ENCODE measurements at regions of chr6 and their contacts with region 1.

Region 1: GRCh38 chr6:21593412-21593926 is at the start of gene SOX4:
- DNase-seq: peak; percentile 82
- ATAC-seq: peak; percentile 67
- H3K4me3 Mint-ChIP-seq: no peak within 1 kb of the TSS
- H3K27ac Mint-ChIP-seq: peak within 1 kb of the TSS; percentile 77
- H3K4me1 Mint-ChIP-seq: peaks cover 21% of the 10 kb centered on the region
- H3K27me3 Mint-ChIP-seq: peaks cover 37% of the 10 kb centered on the region
- total RNA-seq, gene SOX4: 2.3 to 2.5 TPM

Region 2: GRCh38 chr6:20291764-20292580 is 1301.5 kb before region 1 on chr6:
- CTCF ChIA-PET with region 1: interaction called, 3 read pairs
- POLR2A ChIA-PET with region 1: no interaction called
- intact Hi-C with region 1: loop called in 1 of 2 experiments (anchors 5 kb)
- DNase-seq: peak; percentile 87
- ATAC-seq: peak; percentile 90
- H3K4me3 Mint-ChIP-seq: peak overlapping the region; percentile 16
- H3K27ac Mint-ChIP-seq: peak overlapping the region; percentile 8
- H3K4me1 Mint-ChIP-seq: peaks cover 21% of the 10 kb centered on the region
- H3K27me3 Mint-ChIP-seq: no peaks in the 10 kb centered on the region

Region 3: DNA sequence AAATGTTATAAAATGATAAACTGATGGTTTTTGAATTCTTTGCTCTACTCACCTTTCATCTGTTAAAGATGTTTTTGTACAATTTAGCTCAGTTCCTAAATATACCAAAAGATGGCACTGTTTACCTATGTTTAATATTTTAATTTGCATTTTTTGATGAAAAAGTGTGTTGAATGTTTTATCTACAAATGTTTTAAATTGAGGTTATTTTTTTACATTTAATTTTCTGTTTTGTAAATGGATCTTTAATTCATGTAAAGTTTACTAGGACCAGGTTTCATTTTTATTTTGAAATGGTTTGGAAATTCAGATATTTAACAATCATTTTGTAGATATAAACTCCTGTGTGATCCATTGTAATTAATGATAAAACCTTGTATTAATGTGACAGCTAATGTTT is 1029.2 kb before region 1 on chr6:
- CTCF ChIA-PET with region 1: interaction called, 37 read pairs
- POLR2A ChIA-PET with region 1: no interaction called
- intact Hi-C with region 1: loop called (anchors 1 kb)
- DNase-seq: no peak
- ATAC-seq: no peak
- H3K4me3 Mint-ChIP-seq: no peak overlapping the region
- H3K27ac Mint-ChIP-seq: no peak overlapping the region
- H3K4me1 Mint-ChIP-seq: peaks cover 11% of the 10 kb centered on the region
- H3K27me3 Mint-ChIP-seq: no peaks in the 10 kb centered on the region

Region 4: GRCh38 chr6:21123507-21124436 is 469.7 kb before region 1 on chr6:
- CTCF ChIA-PET with region 1: no interaction called
- POLR2A ChIA-PET with region 1: no interaction called
- intact Hi-C with region 1: no loop called
- DNase-seq: no peak
- ATAC-seq: no peak
- H3K4me3 Mint-ChIP-seq: no peak overlapping the region
- H3K27ac Mint-ChIP-seq: no peak overlapping the region
- H3K4me1 Mint-ChIP-seq: no peaks in the 10 kb centered on the region
- H3K27me3 Mint-ChIP-seq: no peaks in the 10 kb centered on the region

Region 5: DNA sequence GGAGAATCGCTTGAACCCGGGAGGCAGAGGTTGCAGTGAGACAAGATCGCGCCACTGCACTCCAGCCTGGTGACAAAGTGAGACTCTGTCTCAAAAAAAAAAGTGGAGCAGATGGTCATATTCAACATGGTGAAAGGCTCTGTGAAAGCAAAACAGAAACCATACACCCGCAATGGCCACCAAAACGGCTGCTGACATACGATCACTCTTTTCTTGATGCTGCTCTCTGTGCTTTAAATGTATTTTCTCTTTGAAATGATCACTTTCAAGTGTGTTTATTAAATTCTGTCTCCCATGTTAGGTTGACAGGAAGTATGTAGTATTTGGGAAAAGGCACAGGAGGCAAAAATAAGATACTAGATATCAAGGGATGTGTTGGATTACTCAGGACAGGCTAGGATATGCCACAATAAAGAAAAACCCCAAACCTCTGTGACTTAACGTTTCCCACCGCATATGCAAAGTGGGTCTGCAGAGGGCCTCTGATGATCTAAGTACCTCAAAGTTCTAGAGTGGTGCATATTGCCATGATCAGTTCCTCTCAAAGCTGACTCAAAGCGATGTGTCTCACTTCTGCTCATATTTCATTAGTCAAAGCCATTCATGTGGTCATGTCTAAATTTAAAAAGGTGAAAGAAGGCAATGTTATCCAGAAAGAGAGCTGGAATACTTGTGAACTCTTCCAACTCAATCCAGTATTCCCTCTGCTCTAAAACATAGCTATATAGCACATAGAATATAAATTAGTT is 155.1 kb before region 1 on chr6:
- CTCF ChIA-PET with region 1: interaction called, 4 read pairs
- POLR2A ChIA-PET with region 1: no interaction called
- intact Hi-C with region 1: loop called (anchors 2 to 10 kb)
- DNase-seq: peak; percentile 73
- ATAC-seq: peak; percentile 94
- H3K4me3 Mint-ChIP-seq: peak overlapping the region; percentile 39
- H3K27ac Mint-ChIP-seq: peak overlapping the region; percentile 55
- H3K4me1 Mint-ChIP-seq: peaks cover 21% of the 10 kb centered on the region
- H3K27me3 Mint-ChIP-seq: peaks cover 11% of the 10 kb centered on the region

Region 6: DNA sequence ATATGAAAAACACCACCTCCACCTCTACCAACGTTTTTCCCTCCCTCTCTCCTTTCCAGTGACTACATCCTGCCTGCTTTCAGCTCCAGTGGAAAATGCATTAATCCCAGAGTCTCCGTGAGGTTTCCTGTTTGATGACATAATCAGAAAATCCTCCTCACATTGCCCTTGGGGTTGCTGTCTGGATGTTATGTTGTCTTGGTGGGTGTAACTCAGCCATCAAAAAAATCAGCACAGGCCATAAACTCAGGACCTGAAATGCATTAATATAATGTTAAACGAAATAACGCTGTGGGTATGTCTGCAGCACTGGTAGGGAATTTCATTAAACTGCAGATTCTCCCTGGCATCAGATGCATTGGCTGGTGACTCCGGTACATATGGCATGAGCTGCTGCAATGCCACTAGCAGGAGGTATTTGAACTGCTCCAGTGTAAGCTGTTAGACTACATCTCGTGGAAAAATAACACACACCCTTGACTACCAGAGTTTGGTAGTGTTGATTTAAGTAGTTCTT is 405.6 kb after region 1 on chr6:
- CTCF ChIA-PET with region 1: no interaction called
- POLR2A ChIA-PET with region 1: no interaction called
- intact Hi-C with region 1: loop called in 1 of 2 experiments (anchors 10 kb)
- DNase-seq: no peak
- ATAC-seq: no peak
- H3K4me3 Mint-ChIP-seq: no peak overlapping the region
- H3K27ac Mint-ChIP-seq: no peak overlapping the region
- H3K4me1 Mint-ChIP-seq: peaks cover 6% of the 10 kb centered on the region
- H3K27me3 Mint-ChIP-seq: peaks cover 4% of the 10 kb centered on the region

Region 7: DNA sequence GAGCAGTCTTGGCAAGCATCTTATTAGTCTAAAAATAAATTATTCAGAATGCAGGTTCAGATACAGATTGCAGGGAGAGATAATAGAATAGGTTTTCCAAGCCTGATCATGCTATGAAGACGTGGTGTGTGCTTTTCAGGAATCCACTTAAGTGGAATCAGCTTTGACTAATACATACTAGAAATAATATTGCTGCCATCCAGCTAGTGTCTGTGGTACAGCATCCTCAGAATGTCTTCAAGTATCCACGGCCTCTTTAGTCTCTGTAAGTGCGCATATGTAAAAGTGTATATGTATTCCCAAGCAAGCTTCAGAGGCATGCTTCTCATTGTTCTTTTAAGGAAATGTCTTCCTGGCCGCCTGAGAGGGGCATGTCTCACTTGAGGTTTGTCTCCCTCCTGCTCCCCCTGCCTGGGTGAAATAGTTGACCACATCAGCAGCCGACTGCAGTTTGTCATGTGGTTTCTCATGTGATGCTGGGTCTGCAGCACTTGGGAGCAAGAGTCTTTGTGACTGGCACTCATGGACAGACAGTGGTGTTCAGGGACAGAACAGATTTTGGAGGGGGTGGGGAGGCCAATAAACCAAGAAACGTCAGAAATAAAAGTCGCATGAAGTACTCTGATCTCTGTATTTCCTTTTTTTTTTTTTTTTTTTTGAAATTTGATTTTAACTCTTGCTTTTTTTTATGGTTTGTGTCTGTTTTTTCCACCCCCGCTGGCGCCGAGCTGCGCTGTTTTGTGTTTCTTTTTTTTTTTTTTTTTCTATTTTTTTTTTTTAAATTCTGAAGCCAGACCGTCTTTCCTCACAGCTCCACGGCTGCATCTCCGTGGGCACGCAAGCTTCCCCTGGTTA is 552.6 kb after region 1 on chr6:
- CTCF ChIA-PET with region 1: no interaction called
- POLR2A ChIA-PET with region 1: no interaction called
- intact Hi-C with region 1: loop called in 1 of 2 experiments (anchors 5 kb)
- DNase-seq: peak; percentile 9
- ATAC-seq: no peak
- H3K4me3 Mint-ChIP-seq: peak overlapping the region; percentile 70
- H3K27ac Mint-ChIP-seq: peak overlapping the region; percentile 63
- H3K4me1 Mint-ChIP-seq: peaks cover 32% of the 10 kb centered on the region
- H3K27me3 Mint-ChIP-seq: peaks cover 36% of the 10 kb centered on the region